Panc1 (cell line): ENCODE measurements at regions of chr19 and their contacts with region 1.

Region 1: DNA sequence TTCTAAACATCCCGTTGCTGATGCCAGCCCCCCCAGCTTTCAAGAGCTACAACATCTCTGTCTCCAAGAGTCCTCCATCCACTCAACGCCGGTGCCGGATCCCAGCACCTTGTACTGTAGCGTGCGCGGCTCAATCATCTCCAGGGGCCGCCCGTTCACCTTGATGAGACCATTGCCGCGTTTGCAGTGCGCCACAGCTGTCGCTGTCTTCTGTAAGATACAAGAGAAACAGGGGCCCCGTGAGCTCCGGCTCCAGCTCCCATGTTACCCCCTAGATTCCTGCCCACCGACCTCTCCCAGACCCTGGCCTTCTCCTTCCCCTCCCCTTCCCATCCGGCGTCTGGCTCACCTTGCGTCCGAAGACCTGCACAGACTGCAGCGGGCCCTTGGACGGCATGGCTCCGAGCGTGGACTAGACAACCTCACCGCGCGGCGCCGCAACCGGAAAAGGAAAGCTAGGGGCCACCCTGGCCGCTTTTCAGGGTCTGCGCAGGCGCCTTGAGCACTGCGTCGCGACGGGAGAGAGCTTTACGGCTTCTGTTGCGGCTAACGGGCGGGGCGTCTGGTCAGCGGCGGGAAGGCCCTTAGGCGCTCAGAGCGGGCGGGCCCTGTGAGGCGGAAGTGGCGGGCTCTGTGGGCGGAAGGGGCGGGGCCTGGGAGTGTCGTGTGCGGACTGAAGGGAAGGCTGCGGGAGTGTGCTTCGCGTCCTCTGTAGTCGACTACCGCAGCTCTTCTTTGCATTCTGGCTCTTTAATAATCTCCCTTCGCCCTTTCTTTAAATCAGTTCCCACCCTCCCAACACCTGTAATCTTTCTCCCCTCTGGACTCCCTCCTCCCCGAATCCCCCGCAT is at the start of gene RPS16:
- DNase-seq: peak; percentile 100
- ATAC-seq: peak; percentile 87
- H3K4me3 ChIP-seq: peak within 1 kb of the TSS; percentile 29 to 58
- H3K27ac ChIP-seq: peak within 1 kb of the TSS; percentile 84
- H3K4me1 ChIP-seq: peaks cover 77% of the 10 kb centered on the region
- H3K27me3 ChIP-seq: no peaks in the 10 kb centered on the region
- CTCF ChIP-seq: no peak
- total RNA-seq, gene RPS16: 27,832 TPM

Region 2: GRCh38 chr19:39328046-39328705 is 107.5 kb before region 1 on chr19:
- CTCF ChIA-PET with region 1: no interaction called
- POLR2A ChIA-PET with region 1: interaction called, 13 read pairs
- in situ Hi-C with region 1: no loop called
- intact Hi-C with region 1: no loop called
- DNase-seq: peak; percentile 97
- ATAC-seq: peak; percentile 84
- H3K4me3 ChIP-seq: no peak overlapping the region
- H3K27ac ChIP-seq: peak overlapping the region; percentile 2
- H3K4me1 ChIP-seq: peaks cover 7% of the 10 kb centered on the region; the same call in 1 of the 2 replicates
- H3K27me3 ChIP-seq: no peaks in the 10 kb centered on the region
- CTCF ChIP-seq: no peak

Region 3: DNA sequence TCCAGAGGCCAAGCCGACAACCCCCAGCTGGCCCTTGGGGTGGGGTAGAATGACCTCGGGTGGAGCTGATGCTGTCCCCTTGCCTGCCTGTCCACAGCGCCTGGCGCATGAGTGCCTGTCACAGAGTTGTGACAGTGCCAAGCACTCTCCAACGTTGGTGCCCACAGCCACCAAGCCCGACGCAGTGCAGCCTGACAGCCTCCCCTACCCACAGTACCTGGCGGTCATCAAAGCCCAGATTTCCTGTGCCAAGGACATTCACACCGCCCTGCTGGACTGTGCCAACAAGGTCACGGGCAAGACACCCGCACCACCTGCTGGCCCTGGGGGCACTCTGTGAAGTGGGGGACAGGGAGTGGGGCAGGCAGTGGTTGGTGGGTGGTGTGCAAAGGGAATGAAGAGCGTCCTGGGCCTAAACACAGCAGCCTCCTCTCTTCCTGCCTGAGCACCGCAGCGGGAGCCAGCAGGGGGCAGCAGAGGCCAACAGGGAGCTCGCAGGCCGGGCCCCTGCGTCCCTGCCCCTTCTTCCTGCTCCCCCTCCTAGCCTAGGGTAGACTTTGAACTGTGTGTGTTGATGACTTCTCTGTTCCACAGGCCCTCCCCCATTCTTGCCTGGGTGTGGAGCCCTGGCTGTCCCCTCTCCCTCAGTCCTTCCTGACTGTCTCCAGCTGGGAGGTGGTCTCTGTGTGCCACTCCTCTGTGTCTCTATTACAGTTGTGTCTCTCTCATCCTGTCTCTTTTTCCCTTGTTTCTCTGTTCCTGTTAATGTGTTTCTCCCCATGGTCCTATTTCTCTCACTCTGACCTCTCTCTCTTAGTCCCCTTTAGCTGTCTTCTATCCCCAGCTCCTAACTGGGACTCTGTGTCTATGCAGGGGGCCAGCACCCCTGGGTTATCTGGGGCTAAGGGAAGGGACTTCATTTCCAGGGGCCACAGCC is 38.1 kb before region 1 on chr19:
- CTCF ChIA-PET with region 1: interaction called, 22 read pairs
- POLR2A ChIA-PET with region 1: interaction called, 524 read pairs
- in situ Hi-C with region 1: no loop called
- intact Hi-C with region 1: no loop called
- DNase-seq: peak; percentile 100
- ATAC-seq: peak; percentile 78
- H3K4me3 ChIP-seq: no peak overlapping the region
- H3K27ac ChIP-seq: peak overlapping the region; percentile 75
- H3K4me1 ChIP-seq: peaks cover 51% of the 10 kb centered on the region
- H3K27me3 ChIP-seq: no peaks in the 10 kb centered on the region
- CTCF ChIP-seq: no peak

Region 4: DNA sequence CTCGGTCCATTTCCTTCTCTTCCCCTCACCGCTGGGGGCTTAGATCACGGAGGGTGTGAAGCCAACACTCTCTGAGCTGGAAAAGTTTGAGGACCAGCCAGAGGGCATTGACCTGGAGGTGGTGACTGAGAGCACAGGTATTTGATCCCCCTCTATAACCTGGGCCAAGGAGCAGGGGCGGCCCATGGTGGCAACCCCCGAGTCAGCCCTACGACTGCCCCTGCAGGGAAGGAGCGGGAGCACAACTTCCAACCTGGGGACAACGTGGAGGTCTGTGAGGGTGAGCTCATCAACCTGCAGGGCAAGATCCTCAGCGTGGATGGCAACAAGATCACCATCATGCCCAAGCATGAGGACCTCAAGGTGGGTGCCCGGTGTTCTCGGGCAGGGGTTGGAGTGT is 33.3 kb after region 1 on chr19:
- CTCF ChIA-PET with region 1: interaction called, 91 read pairs
- POLR2A ChIA-PET with region 1: interaction called, 36 read pairs
- in situ Hi-C with region 1: no loop called
- intact Hi-C with region 1: no loop called
- DNase-seq: no peak
- ATAC-seq: no peak
- H3K4me3 ChIP-seq: no peak overlapping the region
- H3K27ac ChIP-seq: no peak overlapping the region
- H3K4me1 ChIP-seq: no peaks in the 10 kb centered on the region
- H3K27me3 ChIP-seq: no peaks in the 10 kb centered on the region
- CTCF ChIP-seq: no peak

Region 5: DNA sequence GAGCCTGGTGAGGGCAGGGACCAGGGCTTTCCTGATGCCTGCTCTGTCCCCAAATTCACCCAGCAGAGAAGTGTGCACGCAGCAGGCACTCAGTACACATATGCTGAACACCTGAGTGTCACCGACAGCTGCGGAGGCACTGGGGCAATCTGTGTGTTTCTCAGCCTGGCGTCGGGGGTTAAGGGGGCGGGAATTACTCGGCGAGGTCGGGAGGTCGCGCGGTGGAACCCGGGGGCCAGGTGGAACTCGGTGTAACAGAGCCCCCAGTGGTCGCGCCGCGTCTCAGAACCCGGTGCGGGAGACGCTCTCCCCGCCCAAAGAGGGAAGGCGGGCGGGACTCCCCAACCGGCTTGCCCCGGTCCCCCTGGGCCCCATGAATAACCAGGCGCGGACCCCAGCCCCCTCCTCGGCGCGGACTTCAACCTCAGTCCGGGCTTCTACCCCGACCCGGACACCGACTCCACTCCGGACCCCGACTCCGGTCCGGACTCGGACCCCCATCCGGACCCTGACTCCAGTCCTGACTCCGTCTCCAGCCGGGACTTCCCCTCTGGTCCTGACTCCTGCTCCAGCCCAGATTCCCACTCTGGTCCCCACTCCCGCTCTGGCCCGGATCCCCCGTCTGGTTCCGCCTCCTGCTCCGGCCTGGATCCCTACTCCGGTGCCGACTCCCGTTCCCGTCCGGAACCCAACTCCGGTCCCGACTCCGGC is 79.3 kb after region 1 on chr19 and contains the start of gene SELENOV:
- CTCF ChIA-PET with region 1: interaction called, 49 read pairs
- POLR2A ChIA-PET with region 1: interaction called, 63 read pairs
- in situ Hi-C with region 1: no loop called
- intact Hi-C with region 1: no loop called
- DNase-seq: no peak
- ATAC-seq: peak; percentile 56
- H3K4me3 ChIP-seq: peak within 1 kb of the TSS; percentile 30 to 55
- H3K27ac ChIP-seq: peak within 1 kb of the TSS; percentile 5
- H3K4me1 ChIP-seq: peaks cover 26% of the 10 kb centered on the region
- H3K27me3 ChIP-seq: peaks cover 23% of the 10 kb centered on the region
- CTCF ChIP-seq: no peak
- total RNA-seq, gene SELENOV: 0.80 TPM

Region 6: GRCh38 chr19:39590265-39590664 is 154.5 kb after region 1 on chr19:
- CTCF ChIA-PET with region 1: interaction called, 17 read pairs
- POLR2A ChIA-PET with region 1: interaction called, 3 read pairs
- in situ Hi-C with region 1: no loop called
- intact Hi-C with region 1: no loop called
- DNase-seq: no peak
- ATAC-seq: no peak
- H3K4me3 ChIP-seq: no peak overlapping the region
- H3K27ac ChIP-seq: no peak overlapping the region
- H3K4me1 ChIP-seq: no peaks in the 10 kb centered on the region
- H3K27me3 ChIP-seq: peaks cover 77% of the 10 kb centered on the region
- CTCF ChIP-seq: peak; percentile 33; the same call in 1 of the 2 replicates

Region 7: DNA sequence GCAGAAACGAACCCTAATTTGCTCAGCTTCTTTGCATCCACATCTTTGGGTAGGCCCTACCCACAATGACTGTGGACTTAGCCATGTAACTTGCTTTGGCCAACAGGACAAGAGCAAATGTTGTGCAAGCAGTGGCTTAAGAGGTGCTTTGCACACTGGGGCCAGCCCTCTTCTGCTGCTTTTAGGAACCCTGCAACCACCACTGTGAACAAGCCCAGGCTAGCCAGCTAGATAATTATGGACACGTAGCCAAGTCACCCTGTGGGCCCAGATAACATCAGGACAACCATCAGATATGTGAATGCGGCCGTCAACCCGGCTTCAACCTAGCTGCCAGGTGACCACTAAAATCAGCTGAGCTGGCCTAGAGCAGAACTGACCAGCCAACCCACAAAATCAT is 895.3 kb after region 1 on chr19:
- CTCF ChIA-PET with region 1: no interaction called
- POLR2A ChIA-PET with region 1: interaction called, 16 read pairs
- in situ Hi-C with region 1: no loop called
- intact Hi-C with region 1: no loop called
- DNase-seq: no peak
- ATAC-seq: no peak
- H3K4me3 ChIP-seq: no peak overlapping the region
- H3K27ac ChIP-seq: no peak overlapping the region
- H3K4me1 ChIP-seq: no peaks in the 10 kb centered on the region
- H3K27me3 ChIP-seq: no peaks in the 10 kb centered on the region
- CTCF ChIP-seq: no peak